ENCODE measurements at regions of chr6 and their contacts with region 1.

Region 1: GRCh38 chr6:33156561-33156960 is 35.7 kb downstream of the COL11A2 start:
- DNase-seq: no peak
- ATAC-seq: no peak
- H3K4me3 ChIP-seq: no peak overlapping the region
- H3K27ac ChIP-seq: no peak overlapping the region
- H3K4me1 ChIP-seq: peaks cover 5% of the 10 kb centered on the region
- H3K27me3 ChIP-seq: no peaks in the 10 kb centered on the region
- CTCF ChIP-seq: no peak

Region 2: DNA sequence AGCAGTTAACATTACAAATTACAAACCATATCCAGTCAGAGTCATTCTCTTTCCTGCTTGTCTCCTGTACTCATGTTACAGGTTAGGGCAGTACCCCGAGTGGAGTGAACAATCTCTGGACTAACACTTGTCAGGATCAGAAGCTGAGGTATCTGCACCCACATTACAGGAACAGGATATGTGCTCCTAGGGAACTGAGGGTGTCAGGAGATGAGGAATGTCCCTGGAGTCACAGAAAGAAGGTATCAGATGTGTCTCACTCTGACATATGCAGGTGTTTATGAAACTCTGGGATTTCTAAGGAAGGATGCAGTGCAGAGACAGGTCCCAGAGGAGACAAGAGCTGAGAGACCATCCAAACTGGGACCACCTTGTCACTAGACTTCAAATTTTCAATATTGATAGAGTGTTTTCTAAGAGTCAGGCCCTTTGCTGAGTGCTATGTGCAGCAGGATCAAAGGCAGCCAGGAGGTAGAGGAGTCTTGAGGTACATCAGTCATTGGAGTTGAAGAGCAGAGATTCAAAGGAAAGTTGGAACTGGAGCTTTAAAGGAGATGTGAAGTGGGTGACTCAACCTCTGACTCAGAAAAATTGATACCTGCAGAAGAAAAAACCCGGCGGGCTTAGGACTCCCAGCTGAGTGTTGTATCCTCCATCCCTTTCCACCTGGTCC is 68.2 kb before region 1 on chr6:
- CTCF ChIA-PET with region 1: interaction called, 13 read pairs
- POLR2A ChIA-PET with region 1: no interaction called
- in situ Hi-C with region 1: no loop called
- intact Hi-C with region 1: no loop called
- DNase-seq: no peak
- ATAC-seq: no peak
- H3K4me3 ChIP-seq: no peak overlapping the region
- H3K27ac ChIP-seq: no peak overlapping the region
- H3K4me1 ChIP-seq: no peaks in the 10 kb centered on the region
- H3K27me3 ChIP-seq: peaks cover 46% of the 10 kb centered on the region
- CTCF ChIP-seq: no peak